B cell (primary cell): ENCODE measurements at regions of chr6 and their contacts with region 1.

Region 1: DNA sequence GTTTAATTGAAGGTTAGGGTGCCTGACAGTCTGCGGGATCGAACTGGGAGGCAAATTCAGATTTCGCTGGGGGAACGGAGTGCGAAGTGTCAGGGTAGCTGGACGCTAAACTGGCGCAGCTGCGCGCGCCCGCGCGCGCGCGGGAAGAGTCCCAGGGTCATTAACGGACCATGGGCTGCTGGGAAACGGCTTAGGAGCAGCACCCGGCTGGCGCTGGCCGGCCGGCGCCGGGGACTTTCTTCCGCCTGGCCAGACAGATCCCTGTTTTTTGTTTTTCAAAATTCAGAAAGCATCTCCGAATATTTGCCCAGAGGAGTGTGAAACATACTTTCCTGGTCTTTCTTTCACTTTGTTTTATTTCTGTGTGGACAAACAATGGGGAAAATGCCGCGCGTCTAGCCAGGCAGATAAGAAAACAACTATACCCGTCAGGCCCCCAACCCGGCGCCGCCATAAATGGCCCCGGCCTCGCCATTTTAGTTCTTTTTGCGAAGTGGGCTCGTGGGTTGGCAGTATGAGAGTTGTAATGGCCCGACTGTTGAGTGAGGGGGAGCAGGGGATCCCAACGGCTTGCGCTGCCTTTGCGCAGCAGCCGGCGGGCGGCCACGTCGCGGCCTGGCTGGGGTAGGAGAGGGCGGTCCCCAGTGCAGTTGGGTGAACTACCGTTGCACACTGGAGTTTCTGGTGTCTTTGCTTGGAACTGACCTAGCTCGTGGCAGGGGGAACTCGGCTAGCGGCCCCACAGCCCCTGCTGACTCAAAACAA is 7.1 kb downstream of the HSPA1B start:
- DNase-seq: peak; percentile 91
- ATAC-seq: peak; percentile 61
- H3K4me3 ChIP-seq: peak overlapping the region; percentile 85 to 95 (median 90)
- H3K4me3 Mint-ChIP-seq: peak overlapping the region; percentile 87
- H3K27ac ChIP-seq: peak overlapping the region; percentile 97 to 98
- H3K27ac Mint-ChIP-seq: peak overlapping the region; percentile 92
- H3K4me1 ChIP-seq: peaks cover 44 to 75% of the 10 kb centered on the region in 2 donors
- H3K4me1 Mint-ChIP-seq: peaks cover 56% of the 10 kb centered on the region
- H3K27me3 ChIP-seq: no peaks in the 10 kb centered on the region
- H3K27me3 Mint-ChIP-seq: no peaks in the 10 kb centered on the region
- CTCF ChIP-seq: no peak

Region 2: GRCh38 chr6:29887819-29888776 is 1946.5 kb before region 1 on chr6:
- CTCF ChIA-PET with region 1: no interaction called
- POLR2A ChIA-PET with region 1: no interaction called
- intact Hi-C with region 1: no loop called
- DNase-seq: peak; percentile 93
- ATAC-seq: peak; percentile 84
- H3K4me3 ChIP-seq: peak overlapping the region; percentile 31 to 93 (median 90)
- H3K4me3 Mint-ChIP-seq: peak overlapping the region; percentile 94
- H3K27ac ChIP-seq: peak overlapping the region; percentile 92 to 95
- H3K27ac Mint-ChIP-seq: peak overlapping the region; percentile 96
- H3K4me1 ChIP-seq: peaks cover 7 to 23% of the 10 kb centered on the region in 2 donors
- H3K4me1 Mint-ChIP-seq: peaks cover 11% of the 10 kb centered on the region
- H3K27me3 ChIP-seq: no peaks in the 10 kb centered on the region
- H3K27me3 Mint-ChIP-seq: no peaks in the 10 kb centered on the region
- CTCF ChIP-seq: no peak

Region 3: GRCh38 chr6:31652925-31653718 is 181.5 kb before region 1 on chr6:
- CTCF ChIA-PET with region 1: interaction called, 6 read pairs
- POLR2A ChIA-PET with region 1: interaction called, 7 read pairs
- intact Hi-C with region 1: loop called (anchors 2 kb)
- DNase-seq: no peak
- ATAC-seq: peak; percentile 69
- H3K4me3 ChIP-seq: peak overlapping the region; percentile 66 to 96 (median 86)
- H3K4me3 Mint-ChIP-seq: peak overlapping the region; percentile 98
- H3K27ac ChIP-seq: peak overlapping the region; percentile 97 to 98
- H3K27ac Mint-ChIP-seq: peak overlapping the region; percentile 100
- H3K4me1 ChIP-seq: peaks cover 22 to 29% of the 10 kb centered on the region in 2 donors
- H3K4me1 Mint-ChIP-seq: peaks cover 48% of the 10 kb centered on the region
- H3K27me3 ChIP-seq: no peaks in the 10 kb centered on the region
- H3K27me3 Mint-ChIP-seq: no peaks in the 10 kb centered on the region
- CTCF ChIP-seq: no peak

Region 4: DNA sequence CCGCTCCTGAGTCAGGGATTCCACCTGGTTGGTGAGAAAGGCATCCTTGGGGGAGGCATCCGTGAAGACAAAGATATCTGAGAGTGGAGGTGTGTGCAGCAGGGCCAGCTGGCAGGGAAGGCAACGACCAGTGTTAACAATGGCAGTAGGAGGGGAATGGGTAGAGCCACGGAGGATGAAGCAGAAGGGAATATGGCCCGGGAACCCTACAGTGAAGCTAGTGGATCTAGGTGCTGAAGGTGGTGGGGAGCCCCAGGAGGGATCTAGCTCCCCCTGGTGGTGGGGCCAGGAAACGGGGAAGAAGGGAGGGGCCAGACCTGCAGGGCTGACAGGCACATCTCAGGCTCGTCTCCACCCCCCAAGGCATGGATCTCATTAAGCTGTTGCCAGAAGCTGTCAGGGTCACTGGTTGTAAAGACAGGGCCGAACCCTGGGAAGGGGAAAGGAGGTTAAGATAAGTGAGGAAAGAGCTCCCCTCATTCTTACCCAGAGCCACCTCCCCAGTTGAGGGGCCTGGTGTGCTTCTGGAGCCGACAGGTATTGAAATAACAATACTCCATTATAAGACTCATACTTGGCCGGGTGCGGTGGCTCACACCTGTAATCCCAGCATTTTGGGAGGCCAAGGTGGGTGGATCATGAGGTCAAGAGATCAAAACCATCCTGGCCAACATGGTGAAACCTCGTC is 64.8 kb before region 1 on chr6:
- CTCF ChIA-PET with region 1: interaction called, 24 read pairs
- POLR2A ChIA-PET with region 1: interaction called, 6 read pairs
- intact Hi-C with region 1: loop called (anchors 5 kb)
- DNase-seq: peak; percentile 87
- ATAC-seq: peak; percentile 98
- H3K4me3 ChIP-seq: no peak overlapping the region
- H3K4me3 Mint-ChIP-seq: no peak overlapping the region
- H3K27ac ChIP-seq: no peak overlapping the region
- H3K27ac Mint-ChIP-seq: peak overlapping the region; percentile 32
- H3K4me1 ChIP-seq: peaks cover 0 to 9% of the 10 kb centered on the region in 2 donors
- H3K4me1 Mint-ChIP-seq: peaks cover 13% of the 10 kb centered on the region
- H3K27me3 ChIP-seq: no peaks in the 10 kb centered on the region
- H3K27me3 Mint-ChIP-seq: no peaks in the 10 kb centered on the region
- CTCF ChIP-seq: peak; percentile 74

Region 5: DNA sequence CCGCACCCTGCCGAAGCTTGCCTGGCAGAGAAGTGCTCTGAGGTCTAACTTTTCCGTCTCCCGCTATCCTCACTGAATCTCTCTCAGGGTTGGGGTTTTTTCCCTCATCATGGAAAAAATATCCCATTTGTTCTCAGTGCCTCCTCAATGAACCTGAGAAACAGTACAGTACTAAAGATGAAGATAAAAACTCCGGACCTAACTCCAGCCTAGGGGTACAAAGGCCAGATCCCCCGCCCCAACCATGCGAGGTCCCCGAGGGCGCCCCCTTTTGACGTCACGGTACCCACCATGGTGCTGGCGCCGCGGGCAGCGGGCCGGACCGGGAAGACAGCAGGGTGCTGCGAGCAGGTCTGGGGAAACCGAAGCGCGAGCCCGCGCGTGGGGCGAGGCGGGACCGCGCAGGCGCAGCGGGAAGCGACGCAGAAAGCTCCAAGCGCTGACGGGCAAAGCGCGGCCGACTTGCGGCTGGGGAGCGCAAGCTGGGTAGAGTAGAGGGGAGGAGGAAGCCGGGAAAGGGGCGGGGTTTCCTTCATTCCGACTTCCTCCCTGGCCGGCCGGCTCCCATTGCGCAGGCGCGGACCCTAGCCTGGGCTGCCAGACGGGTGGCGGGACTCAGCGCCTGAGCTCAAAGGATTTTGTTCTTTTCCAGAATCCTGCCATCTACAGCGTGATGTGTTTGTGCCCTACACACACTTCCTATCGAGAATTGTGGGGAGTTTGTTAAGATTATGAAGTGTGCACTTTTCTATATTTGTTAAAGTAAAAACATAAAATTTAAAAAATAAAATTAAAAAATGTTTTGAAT is 27.9 kb before region 1 on chr6 and contains the start of gene LSM2:
- CTCF ChIA-PET with region 1: interaction called, 20 read pairs
- POLR2A ChIA-PET with region 1: interaction called, 13 read pairs
- intact Hi-C with region 1: no loop called
- DNase-seq: peak; percentile 97
- ATAC-seq: peak; percentile 98
- H3K4me3 ChIP-seq: peak within 1 kb of the TSS; percentile 68 to 84 (median 84)
- H3K4me3 Mint-ChIP-seq: peak within 1 kb of the TSS; percentile 87
- H3K27ac ChIP-seq: peak within 1 kb of the TSS; percentile 77 to 93
- H3K27ac Mint-ChIP-seq: peak within 1 kb of the TSS; percentile 88
- H3K4me1 ChIP-seq: peaks cover 8 to 11% of the 10 kb centered on the region in 2 donors
- H3K4me1 Mint-ChIP-seq: peaks cover 16% of the 10 kb centered on the region
- H3K27me3 ChIP-seq: no peaks in the 10 kb centered on the region
- H3K27me3 Mint-ChIP-seq: no peaks in the 10 kb centered on the region
- CTCF ChIP-seq: peak; percentile 34
- total RNA-seq, gene LSM2: 45.3 and 52.4 TPM in 2 replicates

Region 6: GRCh38 chr6:31971993-31972708 is 137.5 kb after region 1 on chr6 and contains the start of gene DXO:
- CTCF ChIA-PET with region 1: no interaction called
- POLR2A ChIA-PET with region 1: interaction called, 4 read pairs
- intact Hi-C with region 1: loop called (anchors 10 kb)
- DNase-seq: peak; percentile 100
- ATAC-seq: peak; percentile 89
- H3K4me3 ChIP-seq: peak within 1 kb of the TSS; percentile 51 to 92 (median 80)
- H3K4me3 Mint-ChIP-seq: peak within 1 kb of the TSS; percentile 98
- H3K27ac ChIP-seq: peak within 1 kb of the TSS; percentile 96 to 100
- H3K27ac Mint-ChIP-seq: peak within 1 kb of the TSS; percentile 100
- H3K4me1 ChIP-seq: peaks cover 18 to 23% of the 10 kb centered on the region in 2 donors
- H3K4me1 Mint-ChIP-seq: peaks cover 34% of the 10 kb centered on the region
- H3K27me3 ChIP-seq: no peaks in the 10 kb centered on the region
- H3K27me3 Mint-ChIP-seq: no peaks in the 10 kb centered on the region
- CTCF ChIP-seq: no peak
- total RNA-seq, gene DXO: 33.9 and 36.1 TPM in 2 replicates